ENCODE measurements at regions of chr16 and their contacts with region 1.

Region 1: GRCh38 chr16:89922884-89923690 is at the start of gene TUBB3:
- DNase-seq: peak; percentile 83
- H3K4me3 ChIP-seq: peak within 1 kb of the TSS; percentile 75 to 84 (median 79)
- H3K27ac ChIP-seq: peak within 1 kb of the TSS; percentile 99
- H3K4me1 ChIP-seq: peaks cover 34% of the 10 kb centered on the region
- H3K27me3 ChIP-seq: no peaks in the 10 kb centered on the region
- CTCF ChIP-seq: no peak
- POLR2A ChIP-seq: peak; percentile 99
- total RNA-seq, gene TUBB3: 164 and 215 TPM in 2 replicates

Region 2: GRCh38 chr16:89700100-89700648 is 222.9 kb before region 1 on chr16:
- CTCF ChIA-PET with region 1: interaction called, 3 read pairs
- POLR2A ChIA-PET with region 1: no interaction called
- dilution Hi-C with region 1: no loop called
- intact Hi-C with region 1: loop called (anchors 5 kb)
- DNase-seq: peak; percentile 96
- H3K4me3 ChIP-seq: peak overlapping the region in 2 of 3 experiments; percentile 7 to 62
- H3K27ac ChIP-seq: peak overlapping the region; percentile 26
- H3K4me1 ChIP-seq: peaks cover 9% of the 10 kb centered on the region
- H3K27me3 ChIP-seq: no peaks in the 10 kb centered on the region
- CTCF ChIP-seq: peak; percentile 70 to 88
- POLR2A ChIP-seq: no peak

Region 3: DNA sequence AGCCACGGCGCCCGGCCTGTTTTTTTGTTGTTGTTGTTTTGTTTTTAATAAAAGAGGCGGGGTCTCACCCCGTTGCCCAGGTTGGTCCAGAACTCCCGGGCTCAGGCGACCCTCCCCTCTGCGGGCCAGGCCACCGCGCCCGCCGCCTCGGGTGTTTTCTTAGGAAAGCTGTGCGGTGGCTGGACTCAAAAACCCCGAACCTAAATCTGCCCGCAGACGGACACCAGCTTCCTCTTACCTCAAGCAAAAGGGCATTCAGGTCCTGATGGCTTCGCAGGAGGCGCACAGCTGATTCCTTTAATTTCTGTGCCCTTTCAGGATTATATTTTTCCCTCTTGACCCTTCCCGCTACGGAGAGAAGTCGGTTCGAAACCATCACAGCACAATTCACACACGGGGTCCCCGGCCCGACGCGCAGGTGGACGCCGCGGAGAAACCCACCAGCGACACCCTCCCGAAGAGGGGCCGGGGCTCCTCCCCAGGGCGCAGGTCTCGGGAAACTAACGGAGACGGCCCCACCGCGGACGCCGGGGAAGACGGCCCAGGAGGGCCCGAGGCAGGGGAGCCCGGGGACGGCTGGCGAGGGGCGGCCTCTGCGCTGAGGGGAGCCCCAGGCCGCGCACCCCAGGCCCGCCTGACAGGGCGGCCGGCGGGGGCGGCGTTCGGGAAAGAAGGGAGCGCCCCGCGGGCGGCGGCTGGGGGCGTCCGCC is 107.3 kb before region 1 on chr16:
- CTCF ChIA-PET with region 1: no interaction called
- POLR2A ChIA-PET with region 1: interaction called, 6 read pairs
- dilution Hi-C with region 1: no loop called
- intact Hi-C with region 1: loop called (anchors 5 kb)
- DNase-seq: no peak
- H3K4me3 ChIP-seq: peak overlapping the region; percentile 47 to 91 (median 89)
- H3K27ac ChIP-seq: peak overlapping the region; percentile 73
- H3K4me1 ChIP-seq: peaks cover 6% of the 10 kb centered on the region
- H3K27me3 ChIP-seq: no peaks in the 10 kb centered on the region
- CTCF ChIP-seq: no peak
- POLR2A ChIP-seq: no peak

Region 4: DNA sequence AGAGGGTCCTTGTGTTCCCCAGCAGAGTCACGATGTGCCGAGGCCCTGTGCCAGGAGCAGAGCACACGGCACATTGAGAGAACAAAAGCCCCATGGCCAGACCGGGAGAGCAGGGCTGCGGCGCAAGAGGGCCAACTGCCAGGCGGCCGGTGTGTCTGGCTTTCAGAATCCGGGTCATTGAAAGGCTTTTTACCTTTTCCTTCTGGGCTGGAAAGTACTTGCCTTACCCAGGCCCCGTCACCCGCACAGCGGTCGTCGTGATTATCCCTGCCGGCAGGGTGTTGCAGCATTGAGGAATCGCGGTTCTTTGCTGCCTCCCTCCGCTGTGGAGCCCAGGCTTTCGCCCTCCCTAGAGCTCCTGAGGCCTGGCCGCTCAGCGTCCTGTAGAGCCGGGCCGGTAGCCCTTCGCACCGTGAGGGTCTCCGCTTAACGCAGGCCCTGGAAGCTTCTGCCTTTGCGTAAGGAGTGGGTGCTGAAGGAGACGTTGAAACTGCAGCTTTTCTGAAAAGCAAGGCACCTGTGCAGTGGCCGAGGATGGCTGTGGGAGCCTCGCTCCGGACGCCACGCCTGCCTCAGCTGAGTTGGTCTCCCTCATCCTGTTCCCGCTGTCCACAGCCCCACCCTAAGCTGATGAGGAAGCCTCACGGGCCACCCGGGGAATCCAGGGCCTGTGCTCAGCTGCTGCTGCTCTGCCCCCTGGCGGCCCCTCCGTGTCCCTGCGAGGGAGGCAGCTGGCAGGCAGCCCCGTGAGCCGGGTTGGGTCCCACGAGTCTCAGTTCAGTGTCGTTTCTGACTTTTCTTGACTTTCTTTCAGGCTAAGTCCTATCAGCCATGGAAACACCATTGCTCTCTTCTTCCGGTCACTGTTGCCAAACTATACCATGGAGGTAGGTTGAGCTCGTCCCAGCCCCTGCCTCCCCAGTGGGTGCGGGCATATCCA is 13.0 kb before region 1 on chr16:
- CTCF ChIA-PET with region 1: interaction called, 54 read pairs
- POLR2A ChIA-PET with region 1: interaction called, 21 read pairs
- dilution Hi-C with region 1: no loop called
- intact Hi-C with region 1: no loop called
- DNase-seq: peak; percentile 57
- H3K4me3 ChIP-seq: no peak overlapping the region
- H3K27ac ChIP-seq: no peak overlapping the region
- H3K4me1 ChIP-seq: peaks cover 3% of the 10 kb centered on the region
- H3K27me3 ChIP-seq: no peaks in the 10 kb centered on the region
- CTCF ChIP-seq: peak; percentile 98 to 99
- POLR2A ChIP-seq: no peak

Region 5: DNA sequence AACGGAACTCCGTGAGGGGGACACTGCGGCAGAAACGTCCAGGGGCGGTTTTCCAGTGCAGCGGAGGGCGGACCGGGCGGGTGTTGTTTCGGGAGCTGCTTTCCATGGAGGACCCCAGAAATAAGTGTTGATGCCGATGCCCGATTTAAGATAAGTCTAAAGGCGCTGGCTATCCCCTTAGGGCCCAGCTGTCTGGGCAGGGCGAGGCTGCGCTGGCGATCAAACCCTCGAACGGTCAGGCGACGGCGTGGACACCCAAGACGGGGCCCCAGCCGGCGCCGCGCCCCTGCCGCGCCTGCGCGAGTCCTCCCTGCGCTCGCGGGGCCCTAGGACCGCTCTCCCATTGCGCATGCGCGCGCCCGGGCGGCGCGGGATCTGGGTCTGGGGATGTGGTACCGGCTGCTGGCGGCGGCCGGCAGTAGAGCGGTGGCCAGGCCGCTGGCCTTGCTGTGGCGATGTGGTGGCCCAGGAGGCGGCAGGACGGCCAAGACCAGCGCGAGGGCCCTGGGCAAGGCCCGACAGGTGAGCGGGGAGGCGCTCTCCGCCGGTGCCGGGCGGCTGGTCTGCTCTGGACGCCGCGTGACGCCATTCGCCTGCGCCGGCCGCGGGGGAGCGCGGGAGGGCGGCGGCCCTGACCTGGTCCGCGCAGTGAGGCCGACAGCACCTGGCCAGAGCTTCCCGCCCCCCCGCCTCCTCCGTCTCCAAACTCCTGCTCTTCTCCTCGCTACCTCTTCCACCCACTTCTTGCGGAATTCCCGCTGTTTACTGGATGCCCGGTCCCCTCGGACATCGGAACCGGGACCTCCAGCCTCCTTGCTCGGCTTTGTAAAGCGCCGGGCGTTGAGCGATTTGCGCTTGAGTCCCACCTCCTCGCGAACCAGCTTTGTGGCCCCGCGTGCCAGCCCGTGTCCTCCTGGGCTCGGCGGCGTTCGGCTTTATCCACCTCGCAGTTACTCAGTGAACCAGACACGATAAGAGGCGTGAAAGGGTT is 49.5 kb after region 1 on chr16:
- CTCF ChIA-PET with region 1: interaction called, 3 read pairs
- POLR2A ChIA-PET with region 1: interaction called, 3 read pairs
- dilution Hi-C with region 1: no loop called
- intact Hi-C with region 1: loop called (anchors 2 kb)
- DNase-seq: peak; percentile 93
- H3K4me3 ChIP-seq: peak overlapping the region; percentile 90 to 95 (median 91)
- H3K27ac ChIP-seq: peak overlapping the region; percentile 77
- H3K4me1 ChIP-seq: peaks cover 20% of the 10 kb centered on the region
- H3K27me3 ChIP-seq: no peaks in the 10 kb centered on the region
- CTCF ChIP-seq: no peak
- POLR2A ChIP-seq: peak; percentile 96